IMR-90 (cell line): ENCODE measurements at regions of chr22 and their contacts with region 1.

Region 1: DNA sequence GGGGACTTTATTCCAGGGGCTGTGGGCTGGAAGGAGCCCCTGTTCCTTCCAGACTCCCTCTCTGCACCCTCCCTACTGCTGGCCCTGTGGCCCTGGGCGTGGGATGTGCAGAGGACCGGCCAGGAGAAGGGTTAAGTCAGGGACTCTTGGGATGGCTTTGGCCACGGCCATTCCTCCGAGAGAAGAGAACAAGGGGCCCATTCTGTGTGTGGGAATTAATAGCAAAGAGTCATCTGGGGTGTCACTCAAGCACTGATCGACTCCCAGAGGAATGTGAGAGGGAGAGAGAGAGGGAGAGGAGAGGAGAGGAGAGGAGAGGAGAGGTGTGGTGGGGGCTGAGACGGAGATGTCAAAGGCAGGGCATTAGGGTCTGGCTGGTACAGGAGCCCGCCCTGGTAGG is 14.2 kb upstream of the SOX10 start:
- DNase-seq: no peak
- ATAC-seq: peak; percentile 28; the same call in 1 of the 2 replicates
- H3K4me3 ChIP-seq: no peak overlapping the region
- H3K27ac ChIP-seq: no peak overlapping the region
- H3K4me1 ChIP-seq: peaks cover 3% of the 10 kb centered on the region; the same call in 1 of the 2 replicates
- H3K27me3 ChIP-seq: peaks cover 11% of the 10 kb centered on the region; the same call in 1 of the 2 replicates
- CTCF ChIP-seq: no peak
- POLR2A ChIP-seq: no peak
- RAD21 ChIP-seq: no peak

Region 2: DNA sequence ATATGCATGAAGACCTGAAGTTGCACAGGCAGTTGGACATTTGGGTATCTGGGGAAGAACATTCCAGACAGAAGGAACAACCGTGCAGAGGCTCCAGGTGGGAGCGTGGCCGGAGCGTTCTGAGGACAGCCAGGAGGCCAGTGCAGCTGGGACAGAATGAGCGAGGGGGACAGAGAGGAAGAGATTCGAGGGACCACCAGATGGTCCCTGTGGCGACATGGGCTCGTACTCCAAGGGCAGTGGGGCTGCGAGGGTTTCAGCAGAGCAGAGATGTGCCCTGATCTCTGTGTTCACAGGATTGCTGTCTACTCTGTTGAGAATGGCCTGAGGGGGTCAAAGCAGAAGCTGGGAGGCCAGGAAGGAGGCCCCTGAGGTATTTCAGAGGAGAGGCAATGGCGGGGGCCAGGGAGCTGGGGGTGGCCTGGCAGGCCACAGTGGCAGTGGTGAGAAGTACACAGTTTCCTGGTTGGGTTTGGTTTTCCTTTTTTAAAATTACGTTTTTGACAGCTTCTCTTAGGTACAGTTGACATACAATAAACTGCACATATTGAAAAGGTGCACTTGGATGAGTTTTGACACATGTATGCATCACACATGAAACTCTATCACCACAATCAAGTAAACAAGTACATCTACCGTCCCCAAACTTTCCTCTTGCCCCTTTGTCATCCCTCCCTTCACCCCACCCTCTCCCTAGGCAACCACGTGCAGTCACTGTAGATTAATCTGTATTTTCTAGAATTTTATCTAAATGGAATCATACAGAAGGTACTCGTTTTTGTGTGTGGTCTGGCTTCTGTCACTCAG is 10.7 kb after region 1 on chr22:
- CTCF ChIA-PET with region 1: no interaction called
- POLR2A ChIA-PET with region 1: no interaction called
- dilution Hi-C with region 1: no loop called
- in situ Hi-C with region 1: no loop called
- intact Hi-C with region 1: loop called (anchors 1 kb)
- DNase-seq: no peak
- ATAC-seq: no peak
- H3K4me3 ChIP-seq: no peak overlapping the region
- H3K27ac ChIP-seq: no peak overlapping the region
- H3K4me1 ChIP-seq: no peaks in the 10 kb centered on the region
- H3K27me3 ChIP-seq: peaks cover 20% of the 10 kb centered on the region
- CTCF ChIP-seq: no peak
- POLR2A ChIP-seq: no peak
- RAD21 ChIP-seq: no peak